Heart right ventricle (tissue), 16 donors: ENCODE measurements at regions of chr6 and their contacts with region 1.

Region 1: GRCh38 chr6:80338201-80338836 is 231.8 kb downstream of the BCKDHB start:
- DNase-seq: peak; percentile 45 to 72
- ATAC-seq: peak in 6 of 8 donors; percentile 46 to 72 (median 66)
- H3K4me3 ChIP-seq: no peak overlapping the region
- H3K27ac ChIP-seq: no peak overlapping the region
- H3K4me1 ChIP-seq: peaks cover 0 to 6% (median 0%) of the 10 kb centered on the region in 9 donors
- H3K27me3 ChIP-seq: no peaks in the 10 kb centered on the region
- CTCF ChIP-seq: peak; percentile 41 to 83 (median 74)

Region 2: GRCh38 chr6:80133020-80133419 is 205.3 kb before region 1 on chr6:
- intact Hi-C with region 1: loop called in 2 of 10 experiments (anchors 10 kb)
- DNase-seq: peak in 1 of 2 donors; percentile 62
- ATAC-seq: peak in 6 of 8 donors; percentile 55 to 78 (median 68)
- H3K4me3 ChIP-seq: no peak overlapping the region
- H3K27ac ChIP-seq: no peak overlapping the region
- H3K4me1 ChIP-seq: peaks cover 0 to 6% (median 5%) of the 10 kb centered on the region in 9 donors
- H3K27me3 ChIP-seq: no peaks in the 10 kb centered on the region
- CTCF ChIP-seq: peak in 8 of 9 donors; percentile 34 to 71 (median 62)

Region 3: GRCh38 chr6:80151635-80152034 is 186.7 kb before region 1 on chr6:
- intact Hi-C with region 1: no loop called
- DNase-seq: no peak
- ATAC-seq: peak in 5 of 8 donors; percentile 78 to 95 (median 91)
- H3K4me3 ChIP-seq: no peak overlapping the region
- H3K27ac ChIP-seq: peak overlapping the region in 1 of 10 donors; percentile 64
- H3K4me1 ChIP-seq: peaks cover 0 to 6% (median 0%) of the 10 kb centered on the region in 9 donors
- H3K27me3 ChIP-seq: no peaks in the 10 kb centered on the region
- CTCF ChIP-seq: no peak

Region 4: DNA sequence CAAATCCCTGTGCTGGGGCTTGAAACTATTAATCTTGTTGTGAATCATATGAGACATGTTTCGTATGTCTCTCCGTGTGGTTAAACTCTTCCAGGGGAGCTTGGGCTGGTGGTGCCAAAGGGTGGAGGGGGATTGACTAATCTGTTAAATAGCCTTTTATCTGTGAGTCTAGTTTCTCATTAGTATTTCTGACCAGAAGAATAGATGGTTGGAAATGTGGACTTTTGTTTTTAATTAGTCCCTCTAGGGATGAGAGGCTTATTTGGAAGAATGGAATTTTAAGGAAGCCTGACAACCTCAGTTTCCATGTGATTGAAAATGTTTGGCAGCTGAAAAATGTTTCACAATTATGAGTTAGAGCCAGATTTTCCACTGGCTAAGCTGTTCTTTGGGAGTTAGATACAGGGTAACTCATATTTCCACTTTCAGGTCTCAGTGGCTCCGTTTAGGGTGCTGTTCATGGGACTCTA is 114.5 kb before region 1 on chr6:
- intact Hi-C with region 1: loop called in 4 of 10 experiments (anchors 10 kb)
- DNase-seq: no peak
- ATAC-seq: peak in 5 of 8 donors; percentile 53 to 88 (median 63)
- H3K4me3 ChIP-seq: no peak overlapping the region
- H3K27ac ChIP-seq: no peak overlapping the region
- H3K4me1 ChIP-seq: no peaks in the 10 kb centered on the region
- H3K27me3 ChIP-seq: no peaks in the 10 kb centered on the region
- CTCF ChIP-seq: no peak

Region 5: GRCh38 chr6:80302716-80303115 is 35.6 kb before region 1 on chr6:
- intact Hi-C with region 1: no loop called
- DNase-seq: no peak
- ATAC-seq: no peak
- H3K4me3 ChIP-seq: no peak overlapping the region
- H3K27ac ChIP-seq: no peak overlapping the region
- H3K4me1 ChIP-seq: no peaks in the 10 kb centered on the region
- H3K27me3 ChIP-seq: no peaks in the 10 kb centered on the region
- CTCF ChIP-seq: no peak

Region 6: DNA sequence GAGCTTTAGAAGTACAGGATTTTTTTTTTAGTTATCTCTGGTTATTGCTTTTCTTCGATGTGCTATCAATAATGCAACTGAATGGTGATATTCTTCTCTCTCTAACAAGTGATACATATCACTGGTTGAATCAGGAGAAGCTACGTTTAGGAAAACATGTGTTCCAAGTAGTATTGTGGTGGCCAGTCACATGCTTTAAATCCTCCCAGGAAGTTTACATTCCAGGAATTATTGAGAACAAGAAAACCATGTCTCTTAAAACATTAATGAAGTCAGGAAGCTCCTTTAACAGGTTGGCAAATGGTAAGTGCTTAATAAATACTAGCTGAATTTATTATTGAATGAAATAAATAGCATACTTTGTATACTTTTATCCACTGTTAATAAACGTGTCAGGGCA is 139.3 kb after region 1 on chr6:
- intact Hi-C with region 1: loop called in 1 of 10 experiments (anchors 10 kb)
- DNase-seq: no peak
- ATAC-seq: no peak
- H3K4me3 ChIP-seq: no peak overlapping the region
- H3K27ac ChIP-seq: no peak overlapping the region
- H3K4me1 ChIP-seq: no peaks in the 10 kb centered on the region
- H3K27me3 ChIP-seq: no peaks in the 10 kb centered on the region
- CTCF ChIP-seq: no peak

Region 7: GRCh38 chr6:80658926-80659325 is 320.6 kb after region 1 on chr6:
- intact Hi-C with region 1: no loop called
- DNase-seq: no peak
- ATAC-seq: no peak
- H3K4me3 ChIP-seq: no peak overlapping the region
- H3K27ac ChIP-seq: no peak overlapping the region
- H3K4me1 ChIP-seq: no peaks in the 10 kb centered on the region
- H3K27me3 ChIP-seq: no peaks in the 10 kb centered on the region
- CTCF ChIP-seq: no peak